Prostate gland (tissue), 2 donors: ENCODE measurements at regions of chr12 and their contacts with region 1.

Region 1: GRCh38 chr12:108731105-108731865 is at the start of gene CORO1C:
- DNase-seq: peak; percentile 93
- H3K4me3 ChIP-seq: peak within 1 kb of the TSS; percentile 94
- H3K27ac ChIP-seq: peak within 1 kb of the TSS; percentile 90 to 95
- H3K4me1 ChIP-seq: no peaks in the 10 kb centered on the region
- H3K27me3 ChIP-seq: no peaks in the 10 kb centered on the region
- CTCF ChIP-seq: peak; percentile 76 to 97 (median 88)
- POLR2A ChIP-seq: peak; percentile 96
- total RNA-seq, gene CORO1C: 34.9 to 105 TPM

Region 2: DNA sequence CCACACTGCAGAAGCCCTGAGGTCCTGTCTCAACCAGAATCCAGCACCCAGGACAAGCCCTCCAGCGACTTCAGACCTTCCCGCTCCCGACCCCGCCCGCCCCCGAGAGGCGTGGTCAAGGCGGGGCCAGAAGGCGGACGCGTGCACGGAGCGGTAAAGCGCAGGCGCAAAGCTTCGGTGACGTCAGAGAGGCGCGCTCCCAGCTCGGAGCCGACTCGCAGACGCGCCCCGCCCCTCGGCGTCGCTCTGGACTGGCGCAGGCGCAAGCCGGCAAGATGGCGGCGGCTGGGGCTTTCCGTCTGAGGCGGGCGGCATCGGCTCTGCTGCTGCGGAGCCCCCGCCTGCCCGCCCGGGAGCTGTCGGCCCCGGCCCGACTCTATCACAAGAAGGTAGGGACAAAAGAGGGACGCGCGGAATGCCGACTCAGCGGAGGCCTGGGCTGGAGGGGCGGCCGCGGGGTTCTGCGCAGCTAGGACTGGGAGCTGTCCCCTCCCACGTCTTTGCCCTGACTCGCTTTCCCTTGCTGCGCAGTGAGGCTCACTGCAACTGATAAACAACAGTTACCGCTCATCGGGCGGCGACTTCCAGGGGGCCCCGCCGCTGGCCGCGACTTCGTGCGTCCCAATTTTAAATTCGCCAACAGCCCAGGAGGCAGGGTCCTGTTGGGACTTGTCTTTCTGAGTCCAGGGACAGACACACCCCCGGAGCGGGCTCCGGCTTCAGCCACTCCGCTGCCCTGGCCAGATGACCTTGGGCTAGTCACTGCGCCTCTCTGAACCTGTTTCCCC is 168.7 kb before region 1 on chr12 and contains the start of gene ISCU:
- intact Hi-C with region 1: loop called (anchors 5 kb)
- DNase-seq: peak; percentile 95
- H3K4me3 ChIP-seq: peak within 1 kb of the TSS; percentile 89 to 97
- H3K27ac ChIP-seq: peak within 1 kb of the TSS; percentile 88
- H3K4me1 ChIP-seq: no peaks in the 10 kb centered on the region
- H3K27me3 ChIP-seq: no peaks in the 10 kb centered on the region
- CTCF ChIP-seq: no peak
- POLR2A ChIP-seq: peak; percentile 93
- total RNA-seq, gene ISCU: 170 to 203 TPM

Region 3: GRCh38 chr12:108664338-108665258 is 66.7 kb before region 1 on chr12:
- intact Hi-C with region 1: loop called (anchors 2 kb)
- DNase-seq: peak; percentile 82
- H3K4me3 ChIP-seq: no peak overlapping the region
- H3K27ac ChIP-seq: peak overlapping the region; percentile 60 to 63
- H3K4me1 ChIP-seq: no peaks in the 10 kb centered on the region
- H3K27me3 ChIP-seq: no peaks in the 10 kb centered on the region
- CTCF ChIP-seq: peak; percentile 77 to 95 (median 93)
- POLR2A ChIP-seq: peak; percentile 20

Region 4: DNA sequence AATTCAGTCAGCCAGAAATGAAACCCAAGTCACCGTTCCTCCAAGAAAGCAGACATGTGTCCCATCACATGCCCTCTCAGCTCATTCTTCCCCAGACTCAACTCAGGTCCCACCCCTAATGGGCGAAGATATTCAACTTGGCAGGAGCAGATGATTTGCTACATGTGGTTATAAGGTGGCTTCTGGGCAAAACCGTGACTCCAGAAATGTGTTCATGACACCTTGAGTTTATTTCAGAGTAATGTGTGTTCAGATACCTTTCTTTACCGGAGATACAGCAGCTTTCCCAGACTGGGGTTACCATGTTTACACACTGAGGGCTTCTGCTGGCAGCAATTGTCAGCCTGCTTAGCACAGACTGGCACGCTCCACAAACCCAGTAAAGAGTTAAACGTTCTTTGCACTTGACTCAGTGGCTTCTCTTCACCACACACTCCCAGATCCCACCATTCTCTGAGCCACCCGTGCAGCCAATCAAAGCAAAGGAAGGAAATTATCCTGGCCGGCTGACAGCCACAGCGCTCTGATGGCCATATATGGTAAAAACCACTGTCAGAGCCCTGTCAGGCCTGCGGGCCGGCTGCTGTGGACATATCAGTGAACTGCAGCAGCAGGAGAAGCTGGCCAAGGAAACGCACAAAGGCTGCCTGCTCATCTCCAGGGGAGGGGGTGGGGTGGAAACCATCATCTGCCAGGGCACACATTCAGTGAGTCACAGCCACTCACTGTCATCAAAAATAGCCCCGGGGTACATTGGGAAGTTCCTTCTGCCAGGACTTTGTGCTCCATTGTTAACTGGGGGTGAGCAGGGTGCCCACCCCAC is 39.9 kb before region 1 on chr12:
- intact Hi-C with region 1: loop called (anchors 1 kb)
- DNase-seq: peak; percentile 95
- H3K4me3 ChIP-seq: no peak overlapping the region
- H3K27ac ChIP-seq: peak overlapping the region; percentile 89 to 90
- H3K4me1 ChIP-seq: peaks cover 7% of the 10 kb centered on the region
- H3K27me3 ChIP-seq: no peaks in the 10 kb centered on the region
- CTCF ChIP-seq: peak in 2 of 4 experiments; percentile 54 to 81
- POLR2A ChIP-seq: peak; percentile 42

Region 5: GRCh38 chr12:108773798-108774788 is 42.8 kb after region 1 on chr12:
- intact Hi-C with region 1: loop called (anchors 5 kb)
- DNase-seq: peak; percentile 55
- H3K4me3 ChIP-seq: no peak overlapping the region
- H3K27ac ChIP-seq: peak overlapping the region; percentile 31 to 60
- H3K4me1 ChIP-seq: peaks cover 8% of the 10 kb centered on the region
- H3K27me3 ChIP-seq: no peaks in the 10 kb centered on the region
- CTCF ChIP-seq: no peak
- POLR2A ChIP-seq: no peak

Region 6: DNA sequence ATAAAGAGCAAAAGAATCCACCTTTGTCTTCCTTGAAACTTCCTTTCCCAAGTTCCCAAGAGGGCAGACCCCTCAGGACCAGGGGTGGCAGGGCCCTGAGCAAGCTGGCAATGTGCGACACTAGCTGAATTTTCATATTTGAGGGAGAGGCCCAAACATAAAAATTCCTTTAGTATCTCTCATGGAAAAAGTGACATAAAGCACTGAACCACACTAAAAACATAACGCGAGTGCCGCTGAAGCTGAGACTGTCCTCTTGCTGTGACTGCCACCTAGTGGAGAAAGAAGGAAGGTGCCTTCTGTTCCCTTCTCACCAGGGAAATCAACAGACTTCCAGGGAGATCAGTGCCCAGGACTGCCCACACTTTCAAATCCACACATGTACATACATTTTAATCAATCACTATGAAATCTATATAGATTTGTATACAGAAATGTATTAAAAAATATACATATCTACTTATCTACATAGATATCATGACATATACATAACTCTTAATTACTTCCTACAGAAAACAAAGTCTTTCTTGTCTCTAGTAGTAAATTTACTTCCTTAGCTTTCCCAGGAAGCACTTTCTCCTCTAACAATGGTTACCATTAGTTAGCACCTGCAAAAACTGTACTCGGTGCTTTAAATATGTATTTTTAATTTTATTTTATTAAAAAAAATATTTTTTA is 72.3 kb after region 1 on chr12:
- intact Hi-C with region 1: loop called (anchors 5 kb)
- DNase-seq: peak; percentile 84
- H3K4me3 ChIP-seq: no peak overlapping the region
- H3K27ac ChIP-seq: peak overlapping the region; percentile 67 to 71
- H3K4me1 ChIP-seq: no peaks in the 10 kb centered on the region
- H3K27me3 ChIP-seq: no peaks in the 10 kb centered on the region
- CTCF ChIP-seq: peak; percentile 85 to 96 (median 95)
- POLR2A ChIP-seq: no peak

Region 7: DNA sequence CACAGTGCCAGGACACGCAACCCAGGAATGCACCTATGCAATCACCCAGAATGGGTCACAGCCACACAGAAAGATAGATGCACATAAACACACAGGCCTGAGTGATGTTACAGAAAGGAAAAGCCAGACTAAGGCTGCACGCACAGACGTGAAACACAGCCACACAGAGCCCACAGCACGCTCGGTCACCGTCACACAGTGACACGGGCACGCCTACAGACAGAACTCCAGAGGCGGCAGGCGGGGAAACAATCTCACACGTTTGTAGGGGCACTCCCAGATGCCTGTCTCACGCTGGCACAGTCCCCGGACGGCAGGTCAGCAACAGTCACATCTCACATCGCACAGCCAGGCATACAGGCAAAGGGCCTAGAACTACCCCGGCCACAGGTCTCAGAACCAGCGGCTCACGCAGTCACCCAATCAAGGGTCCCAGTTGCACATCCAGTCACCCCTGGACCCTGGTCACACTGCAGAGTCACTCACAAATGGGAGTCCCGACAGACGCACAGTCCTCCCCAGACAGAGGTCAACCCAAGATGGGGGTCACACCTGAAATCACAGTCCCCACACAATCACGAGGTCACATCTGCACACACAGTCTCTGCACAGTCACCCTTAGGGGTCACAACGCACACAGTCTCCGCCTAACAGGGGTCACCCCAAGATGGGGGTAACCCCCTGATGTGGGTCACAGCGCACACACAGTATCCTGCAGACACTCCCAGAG is 125.3 kb after region 1 on chr12:
- intact Hi-C with region 1: loop called (anchors 5 kb)
- DNase-seq: peak; percentile 59
- H3K4me3 ChIP-seq: peak overlapping the region; percentile 58 to 61
- H3K27ac ChIP-seq: peak overlapping the region; percentile 68 to 82
- H3K4me1 ChIP-seq: peaks cover 10% of the 10 kb centered on the region
- H3K27me3 ChIP-seq: no peaks in the 10 kb centered on the region
- CTCF ChIP-seq: no peak
- POLR2A ChIP-seq: peak; percentile 40